ENCODE measurements at regions of chr14 and their contacts with region 1.

Region 1: GRCh38 chr14:94036313-94037050 is 10.3 kb downstream of the OTUB2 start:
- DNase-seq: peak; percentile 71 to 76
- ATAC-seq: peak; percentile 87 to 97
- H3K4me3 ChIP-seq: no peak overlapping the region
- H3K27ac ChIP-seq: no peak overlapping the region
- H3K4me1 ChIP-seq: no peaks in the 10 kb centered on the region
- CTCF ChIP-seq: peak; percentile 62
- EP300 ChIP-seq: no peak
- POLR2A ChIP-seq: no peak
- RAD21 ChIP-seq: peak; percentile 54 to 58; a peak in 4 of 5 replicates

Region 2: GRCh38 chr14:93980456-93981201 is 55.9 kb before region 1 on chr14:
- CTCF ChIA-PET with region 1: no interaction called
- POLR2A ChIA-PET with region 1: no interaction called
- DNase-seq: no peak
- ATAC-seq: no peak
- H3K4me3 ChIP-seq: no peak overlapping the region
- H3K27ac ChIP-seq: no peak overlapping the region
- H3K4me1 ChIP-seq: 0 out of 3 replicates have a peak, but pooled peaks cover 7% of the 10 kb centered on the region
- CTCF ChIP-seq: no peak
- EP300 ChIP-seq: no peak
- POLR2A ChIP-seq: no peak
- RAD21 ChIP-seq: no peak

Region 3: DNA sequence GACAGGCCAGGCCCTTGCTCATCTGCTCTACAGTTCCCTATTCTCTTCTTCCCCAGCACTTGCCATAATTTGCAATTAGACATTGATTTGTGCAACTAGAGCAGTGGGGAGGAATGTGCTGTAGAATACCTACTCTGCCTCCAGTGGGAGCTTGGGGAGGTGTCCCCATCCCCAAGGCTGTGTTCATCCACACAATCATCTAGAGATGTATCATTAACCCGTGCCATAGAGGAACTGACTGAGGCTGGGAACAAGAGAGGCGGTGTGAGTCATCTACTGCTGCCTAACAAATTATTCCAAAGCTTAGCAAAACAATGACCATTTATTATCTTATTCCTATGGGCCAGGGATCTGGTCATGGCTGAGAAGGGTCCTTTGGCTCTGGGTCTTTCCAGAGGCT is 15.5 kb before region 1 on chr14:
- CTCF ChIA-PET with region 1: interaction called, 12 read pairs
- POLR2A ChIA-PET with region 1: interaction called, 3 read pairs
- DNase-seq: peak in 1 of 2 experiments; percentile 22
- ATAC-seq: peak; percentile 21 to 37; a peak in 2 of 6 replicates
- H3K4me3 ChIP-seq: no peak overlapping the region
- H3K27ac ChIP-seq: no peak overlapping the region
- H3K4me1 ChIP-seq: no peaks in the 10 kb centered on the region
- CTCF ChIP-seq: no peak
- EP300 ChIP-seq: no peak
- POLR2A ChIP-seq: no peak
- RAD21 ChIP-seq: no peak

Region 4: GRCh38 chr14:94051115-94051514 is 14.6 kb after region 1 on chr14:
- CTCF ChIA-PET with region 1: interaction called, 18 read pairs
- POLR2A ChIA-PET with region 1: no interaction called
- DNase-seq: peak in 1 of 2 experiments; percentile 41
- ATAC-seq: peak; percentile 55 to 76; a peak in 3 of 6 replicates
- H3K4me3 ChIP-seq: no peak overlapping the region
- H3K27ac ChIP-seq: no peak overlapping the region
- H3K4me1 ChIP-seq: no peaks in the 10 kb centered on the region
- CTCF ChIP-seq: peak; percentile 46
- EP300 ChIP-seq: no peak
- POLR2A ChIP-seq: no peak
- RAD21 ChIP-seq: peak; percentile 29 to 34; a peak in 3 of 5 replicates

Region 5: GRCh38 chr14:94100847-94101246 is 64.4 kb after region 1 on chr14:
- CTCF ChIA-PET with region 1: no interaction called
- POLR2A ChIA-PET with region 1: no interaction called
- DNase-seq: peak; percentile 12 to 15
- ATAC-seq: peak; percentile 67 to 75; a peak in 5 of 6 replicates
- H3K4me3 ChIP-seq: no peak overlapping the region
- H3K27ac ChIP-seq: no peak overlapping the region
- H3K4me1 ChIP-seq: no peaks in the 10 kb centered on the region; the same call in 2 of the 3 replicates
- CTCF ChIP-seq: no peak
- EP300 ChIP-seq: no peak
- POLR2A ChIP-seq: no peak
- RAD21 ChIP-seq: no peak